ENCODE measurements at regions of chr19 and their contacts with region 1.

Region 1: DNA sequence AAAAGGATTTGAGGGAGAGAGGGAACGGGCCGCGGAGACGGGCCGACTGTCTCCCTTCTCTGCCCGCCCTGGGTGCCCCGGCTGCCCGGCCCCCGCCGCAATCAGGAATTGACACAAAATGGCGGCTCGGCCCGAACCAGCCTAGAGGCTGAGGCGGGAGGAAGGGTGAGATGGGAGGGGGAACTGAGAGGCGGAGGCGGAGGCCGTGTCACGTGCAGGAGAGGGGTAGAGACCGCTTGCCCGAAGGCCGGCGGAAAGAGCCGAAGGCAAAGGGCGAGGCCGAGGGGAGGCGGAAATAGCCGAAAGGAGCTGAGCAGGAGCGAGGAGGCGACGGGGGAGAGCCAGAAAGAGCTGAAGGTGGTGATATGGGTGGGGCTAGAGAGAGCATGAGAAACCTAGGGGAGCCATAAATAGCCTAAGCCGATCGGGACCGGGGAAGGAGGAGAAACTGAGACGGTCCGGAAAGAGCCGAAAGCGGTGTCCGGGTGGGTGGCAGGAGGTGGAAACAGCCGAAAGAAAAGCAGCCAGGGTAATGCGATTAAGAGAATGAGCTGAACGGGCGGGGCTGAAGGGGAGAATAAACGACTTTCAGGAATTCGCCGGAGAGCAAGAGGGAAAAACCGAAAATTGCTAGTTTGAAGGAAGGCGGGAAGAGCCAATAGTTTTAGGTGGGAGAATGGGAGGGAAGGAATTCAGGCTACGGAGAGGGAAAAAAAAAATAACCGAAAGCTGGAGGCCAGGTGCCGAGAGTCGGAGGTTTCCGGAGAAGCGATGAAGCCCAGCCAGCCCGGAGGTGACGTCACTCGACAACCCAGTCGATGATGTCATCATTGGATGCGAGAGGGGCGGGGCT is at the start of gene ZC3H4:
- DNase-seq: peak; percentile 100
- ATAC-seq: peak; percentile 89
- H3K4me3 ChIP-seq: peak within 1 kb of the TSS; percentile 87 to 100 (median 98)
- H3K27ac ChIP-seq: peak within 1 kb of the TSS; percentile 96 to 100 (median 99)
- H3K4me1 ChIP-seq: peaks cover 28 to 29% of the 10 kb centered on the region in 2 donors
- H3K27me3 ChIP-seq: no peaks in the 10 kb centered on the region
- CTCF ChIP-seq: no peak
- POLR2A ChIP-seq: peak; percentile 85 to 86
- total RNA-seq, gene ZC3H4: 16.2 to 31.7 (median 22.8) TPM

Region 2: GRCh38 chr19:45584332-45585157 is 1528.7 kb before region 1 on chr19 and contains the start of gene OPA3:
- in situ Hi-C with region 1: no loop called
- intact Hi-C with region 1: loop called (anchors 5 kb)
- DNase-seq: peak; percentile 99 to 100
- ATAC-seq: peak; percentile 94 to 96
- H3K4me3 ChIP-seq: peak within 1 kb of the TSS; percentile 68 to 93 (median 76)
- H3K27ac ChIP-seq: peak within 1 kb of the TSS; percentile 92 to 99 (median 97)
- H3K4me1 ChIP-seq: peaks cover 9 to 13% of the 10 kb centered on the region in 2 donors
- H3K27me3 ChIP-seq: no peaks in the 10 kb centered on the region
- CTCF ChIP-seq: peak in 1 of 5 experiments; percentile 26
- POLR2A ChIP-seq: peak; percentile 71 to 84
- total RNA-seq, gene OPA3: 14.8 to 32.5 (median 20.3) TPM

Region 3: GRCh38 chr19:46932346-46932745 is 180.9 kb before region 1 on chr19:
- in situ Hi-C with region 1: no loop called
- intact Hi-C with region 1: no loop called
- DNase-seq: no peak
- ATAC-seq: no peak
- H3K4me3 ChIP-seq: no peak overlapping the region
- H3K27ac ChIP-seq: peak overlapping the region in 1 of 4 donors; percentile 32
- H3K4me1 ChIP-seq: peaks cover 62 to 69% of the 10 kb centered on the region in 2 donors
- H3K27me3 ChIP-seq: no peaks in the 10 kb centered on the region
- CTCF ChIP-seq: no peak
- POLR2A ChIP-seq: no peak

Region 4: GRCh38 chr19:47097396-47098201 is 15.6 kb before region 1 on chr19:
- in situ Hi-C with region 1: no loop called
- intact Hi-C with region 1: loop called (anchors 1 kb)
- DNase-seq: peak; percentile 56 to 79
- ATAC-seq: peak; percentile 53 to 65
- H3K4me3 ChIP-seq: peak overlapping the region; percentile 27 to 50 (median 38)
- H3K27ac ChIP-seq: peak overlapping the region; percentile 79 to 87 (median 84)
- H3K4me1 ChIP-seq: peaks cover 69 to 78% of the 10 kb centered on the region in 2 donors
- H3K27me3 ChIP-seq: no peaks in the 10 kb centered on the region
- CTCF ChIP-seq: no peak
- POLR2A ChIP-seq: no peak

Region 5: DNA sequence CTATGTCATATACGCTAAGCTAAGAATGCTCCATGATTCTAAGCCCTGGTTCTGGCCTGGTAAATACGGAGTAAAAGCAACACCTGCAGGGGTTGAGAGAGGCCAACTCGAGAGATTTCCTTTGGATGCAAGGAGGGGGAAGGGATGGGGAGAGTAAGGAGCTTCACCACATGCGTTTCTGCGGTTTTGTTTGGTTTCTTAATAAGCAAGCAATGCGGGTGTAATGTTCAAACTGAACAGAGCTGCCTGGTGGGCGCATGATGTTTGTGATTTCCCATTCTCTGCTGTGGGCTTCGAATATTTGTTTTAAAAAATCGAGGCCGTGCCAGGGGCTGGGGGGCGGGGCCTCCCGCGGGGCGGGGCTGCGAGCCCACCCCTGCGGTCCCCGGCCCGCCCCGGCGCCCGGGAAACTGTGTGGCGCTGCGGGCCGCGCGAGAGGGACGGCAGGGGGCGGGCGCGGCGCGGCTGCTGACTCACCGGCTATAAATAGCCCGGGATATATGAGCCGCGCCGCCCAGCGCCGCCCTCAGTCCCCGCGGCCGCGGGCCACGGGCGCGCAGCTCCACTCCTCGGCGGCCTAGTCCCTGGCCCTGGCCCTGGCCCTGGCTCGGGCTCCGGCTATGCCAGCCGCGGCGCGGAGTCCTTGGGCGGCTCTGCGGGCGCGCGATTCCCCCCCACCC is 112.7 kb after region 1 on chr19:
- in situ Hi-C with region 1: no loop called
- intact Hi-C with region 1: loop called (anchors 2 kb)
- DNase-seq: peak; percentile 70 to 87
- ATAC-seq: peak; percentile 43 to 54
- H3K4me3 ChIP-seq: peak overlapping the region; percentile 72 to 100 (median 86)
- H3K27ac ChIP-seq: peak overlapping the region; percentile 98 to 100 (median 100)
- H3K4me1 ChIP-seq: peaks cover 26% of the 10 kb centered on the region in 2 donors
- H3K27me3 ChIP-seq: no peaks in the 10 kb centered on the region
- CTCF ChIP-seq: peak; percentile 27 to 77 (median 61)
- POLR2A ChIP-seq: peak; percentile 100

Region 6: GRCh38 chr19:47357788-47358680 is 244.8 kb after region 1 on chr19:
- in situ Hi-C with region 1: no loop called
- intact Hi-C with region 1: no loop called
- DNase-seq: no peak
- ATAC-seq: no peak
- H3K4me3 ChIP-seq: no peak overlapping the region
- H3K27ac ChIP-seq: no peak overlapping the region
- H3K4me1 ChIP-seq: no peaks in the 10 kb centered on the region
- H3K27me3 ChIP-seq: no peaks in the 10 kb centered on the region
- CTCF ChIP-seq: no peak
- POLR2A ChIP-seq: no peak

Region 7: GRCh38 chr19:49073514-49074378 is 1960.5 kb after region 1 on chr19:
- in situ Hi-C with region 1: no loop called
- intact Hi-C with region 1: loop called (anchors 5 kb)
- DNase-seq: peak; percentile 47 to 86
- ATAC-seq: peak; percentile 72 to 80
- H3K4me3 ChIP-seq: peak overlapping the region; percentile 14 to 52 (median 48)
- H3K27ac ChIP-seq: peak overlapping the region; percentile 85 to 95 (median 92)
- H3K4me1 ChIP-seq: peaks cover 14 to 24% of the 10 kb centered on the region in 2 donors
- H3K27me3 ChIP-seq: no peaks in the 10 kb centered on the region
- CTCF ChIP-seq: peak; percentile 27 to 60 (median 55)
- POLR2A ChIP-seq: peak; percentile 46 to 49